ENCODE measurements at regions of chrX and their contacts with region 1.

Region 1: DNA sequence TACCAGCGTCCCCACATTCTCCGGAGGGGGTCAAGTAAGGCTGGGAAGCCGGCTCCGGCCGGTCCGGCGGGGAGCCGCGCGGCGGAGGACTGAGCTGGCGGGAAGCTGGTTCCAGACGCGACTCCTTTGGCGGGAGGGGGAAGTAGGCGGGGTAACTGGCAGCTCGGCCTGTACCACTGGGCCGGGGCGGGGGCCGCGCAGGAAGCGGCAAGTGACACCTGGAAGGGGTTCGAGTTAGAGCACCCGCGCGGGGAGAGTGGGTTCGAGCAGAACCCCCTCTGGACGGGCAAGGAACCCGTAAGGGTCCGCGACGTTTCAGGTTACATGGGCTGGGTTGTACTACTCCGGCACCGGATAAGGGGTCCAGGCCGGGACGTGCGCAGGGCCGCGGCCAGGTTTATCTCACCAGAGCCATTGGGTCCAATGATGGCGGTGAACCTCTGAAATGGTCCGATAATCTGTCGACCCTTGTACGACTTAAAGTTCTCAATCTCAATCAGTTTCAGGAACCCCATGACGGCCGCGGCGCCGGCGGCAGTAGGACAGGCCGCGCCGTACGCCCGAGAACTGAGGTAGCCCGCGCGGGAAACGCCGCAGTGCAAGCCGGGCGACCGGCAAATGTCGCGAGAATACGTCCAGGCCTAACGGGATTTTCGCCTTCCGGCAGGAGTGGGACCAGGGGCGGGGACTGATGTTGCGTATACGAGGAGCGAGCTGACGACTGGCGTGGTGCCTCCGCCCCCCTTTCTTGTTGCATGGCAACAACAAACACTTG is at the start of gene SMC1A:
- DNase-seq: peak; percentile 96
- H3K4me3 ChIP-seq: peak within 1 kb of the TSS; percentile 76
- H3K4me3 Mint-ChIP-seq: peak within 1 kb of the TSS; percentile 83
- H3K27ac Mint-ChIP-seq: peak within 1 kb of the TSS; percentile 98
- H3K4me1 ChIP-seq: 0 out of 2 replicates have a peak, but pooled peaks cover 4% of the 10 kb centered on the region
- H3K4me1 Mint-ChIP-seq: peaks cover 6% of the 10 kb centered on the region
- H3K27me3 ChIP-seq: no peaks in the 10 kb centered on the region
- H3K27me3 Mint-ChIP-seq: no peaks in the 10 kb centered on the region
- CTCF ChIP-seq: no peak
- total RNA-seq, gene SMC1A: 92.4 and 102 TPM in 2 replicates

Region 2: GRCh38 chrX:53239474-53239873 is 182.8 kb before region 1 on chrX:
- CTCF ChIA-PET with region 1: no interaction called
- POLR2A ChIA-PET with region 1: no interaction called
- intact Hi-C with region 1: no loop called
- DNase-seq: peak in 1 of 2 experiments; percentile 32
- H3K4me3 ChIP-seq: no peak overlapping the region
- H3K4me3 Mint-ChIP-seq: no peak overlapping the region
- H3K27ac Mint-ChIP-seq: no peak overlapping the region
- H3K4me1 ChIP-seq: no peaks in the 10 kb centered on the region
- H3K4me1 Mint-ChIP-seq: no peaks in the 10 kb centered on the region
- H3K27me3 ChIP-seq: no peaks in the 10 kb centered on the region
- H3K27me3 Mint-ChIP-seq: no peaks in the 10 kb centered on the region
- CTCF ChIP-seq: peak in 1 of 2 experiments; percentile 19

Region 3: GRCh38 chrX:53433651-53434639 is 11.7 kb after region 1 on chrX and contains the start of gene HSD17B10:
- CTCF ChIA-PET with region 1: no interaction called
- POLR2A ChIA-PET with region 1: interaction called, 3 read pairs
- intact Hi-C with region 1: loop called (anchors 1 kb)
- DNase-seq: peak; percentile 89
- H3K4me3 ChIP-seq: peak within 1 kb of the TSS; percentile 87
- H3K4me3 Mint-ChIP-seq: peak within 1 kb of the TSS; percentile 97
- H3K27ac Mint-ChIP-seq: peak within 1 kb of the TSS; percentile 79
- H3K4me1 ChIP-seq: peaks cover 7% of the 10 kb centered on the region; the same call in 1 of the 2 replicates
- H3K4me1 Mint-ChIP-seq: peaks cover 7% of the 10 kb centered on the region
- H3K27me3 ChIP-seq: no peaks in the 10 kb centered on the region
- H3K27me3 Mint-ChIP-seq: no peaks in the 10 kb centered on the region
- CTCF ChIP-seq: no peak
- total RNA-seq, gene HSD17B10: 129 and 137 TPM in 2 replicates

Region 4: GRCh38 chrX:53441531-53442321 is 19.5 kb after region 1 on chrX:
- CTCF ChIA-PET with region 1: interaction called, 4 read pairs
- POLR2A ChIA-PET with region 1: interaction called, 4 read pairs
- intact Hi-C with region 1: loop called (anchors 2 kb)
- DNase-seq: peak; percentile 83 to 84
- H3K4me3 ChIP-seq: peak overlapping the region; percentile 31
- H3K4me3 Mint-ChIP-seq: peak overlapping the region; percentile 75
- H3K27ac Mint-ChIP-seq: no peak overlapping the region
- H3K4me1 ChIP-seq: no peaks in the 10 kb centered on the region
- H3K4me1 Mint-ChIP-seq: no peaks in the 10 kb centered on the region
- H3K27me3 ChIP-seq: no peaks in the 10 kb centered on the region
- H3K27me3 Mint-ChIP-seq: no peaks in the 10 kb centered on the region
- CTCF ChIP-seq: no peak

Region 5: GRCh38 chrX:53599781-53600396 is 177.6 kb after region 1 on chrX:
- CTCF ChIA-PET with region 1: no interaction called
- POLR2A ChIA-PET with region 1: no interaction called
- intact Hi-C with region 1: no loop called
- DNase-seq: no peak
- H3K4me3 ChIP-seq: no peak overlapping the region
- H3K4me3 Mint-ChIP-seq: no peak overlapping the region
- H3K27ac Mint-ChIP-seq: no peak overlapping the region
- H3K4me1 ChIP-seq: no peaks in the 10 kb centered on the region
- H3K4me1 Mint-ChIP-seq: no peaks in the 10 kb centered on the region
- H3K27me3 ChIP-seq: no peaks in the 10 kb centered on the region
- H3K27me3 Mint-ChIP-seq: no peaks in the 10 kb centered on the region
- CTCF ChIP-seq: no peak